Esophagus squamous epithelium (tissue), 5 donors: ENCODE measurements at regions of chr4 and their contacts with region 1.

Region 1: GRCh38 chr4:153750197-153750817 is 9.5 kb downstream of the RNF175 start:
- DNase-seq: no peak
- H3K4me3 ChIP-seq: no peak overlapping the region
- H3K27ac ChIP-seq: no peak overlapping the region
- H3K4me1 ChIP-seq: peaks cover 7 to 25% (median 16%) of the 10 kb centered on the region in 3 donors
- H3K27me3 ChIP-seq: no peaks in the 10 kb centered on the region
- CTCF ChIP-seq: peak; percentile 34 to 72 (median 59)
- POLR2A ChIP-seq: no peak

Region 2: DNA sequence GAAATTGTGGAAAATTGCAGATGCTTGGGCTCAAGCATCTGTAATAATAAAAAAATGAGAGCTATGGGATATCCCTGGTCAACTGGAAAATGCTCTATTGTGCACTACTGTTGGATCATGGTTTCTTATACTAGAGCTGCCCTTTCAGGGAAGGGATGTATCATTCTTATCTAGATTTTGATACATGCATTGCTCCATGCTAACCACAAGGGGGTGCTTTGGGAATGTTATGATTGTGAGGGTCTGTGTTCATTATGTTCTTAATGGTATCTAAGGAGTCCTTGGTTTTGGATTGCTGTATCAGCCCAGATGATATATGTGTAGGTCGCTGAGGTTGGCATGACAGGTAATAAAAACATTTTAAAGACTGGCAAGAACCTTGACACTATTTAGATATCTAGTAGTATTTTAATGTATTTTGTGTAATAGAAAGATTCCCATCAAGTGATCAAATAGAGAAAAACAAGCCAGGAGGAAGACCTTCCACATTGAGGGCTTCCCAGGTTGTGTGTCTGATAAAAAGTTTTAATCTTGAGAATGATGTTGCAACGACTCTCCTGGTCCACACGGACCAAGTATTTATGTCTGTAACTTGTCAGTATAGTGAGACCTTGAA is 115.5 kb before region 1 on chr4:
- intact Hi-C with region 1: loop called (anchors 10 kb)
- DNase-seq: no peak
- H3K4me3 ChIP-seq: no peak overlapping the region
- H3K27ac ChIP-seq: no peak overlapping the region
- H3K4me1 ChIP-seq: no peaks in the 10 kb centered on the region
- H3K27me3 ChIP-seq: no peaks in the 10 kb centered on the region
- CTCF ChIP-seq: peak; percentile 28 to 71 (median 58)
- POLR2A ChIP-seq: no peak

Region 3: DNA sequence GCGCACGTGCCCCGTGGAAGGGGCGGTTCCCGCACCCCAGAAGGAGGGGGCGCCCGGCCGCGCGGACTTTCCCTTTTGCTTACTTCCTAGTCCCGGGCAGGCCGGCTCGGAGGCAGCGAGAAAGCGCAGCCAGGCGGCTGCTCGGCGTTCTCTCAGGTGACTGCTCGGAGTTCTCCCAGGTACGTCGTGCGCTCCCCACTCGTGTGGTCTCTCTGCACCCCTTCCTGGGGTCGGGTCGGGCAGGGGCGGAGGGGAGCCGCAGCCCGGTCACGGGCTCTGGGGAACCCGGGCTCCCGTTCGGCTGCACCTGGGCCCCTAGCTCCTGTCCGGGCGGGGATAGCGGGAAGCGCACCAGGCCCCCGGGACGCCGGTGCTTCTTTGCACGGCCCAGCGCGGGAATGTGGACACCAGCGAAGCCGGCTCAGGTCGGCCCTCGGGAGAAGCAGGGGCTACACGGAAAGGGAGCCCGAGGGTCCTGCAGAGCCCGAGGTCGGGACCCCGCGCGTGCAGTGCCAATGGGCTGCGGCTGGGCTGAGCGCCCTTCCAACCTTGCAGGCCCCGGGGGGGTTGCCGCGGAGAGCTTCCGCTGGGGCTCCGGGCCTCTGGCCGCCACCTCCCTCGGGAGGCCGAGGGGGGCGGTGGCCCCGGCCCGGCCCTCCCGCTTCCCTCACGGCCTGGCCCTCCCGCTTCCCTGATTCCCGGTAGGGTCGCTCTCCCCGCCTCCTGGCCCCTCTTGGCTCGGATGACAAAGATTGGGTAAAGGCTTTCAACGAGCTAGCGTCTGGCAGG is 65.9 kb before region 1 on chr4 and contains the start of gene TLR2:
- intact Hi-C with region 1: no loop called
- DNase-seq: peak; percentile 9
- H3K4me3 ChIP-seq: peak within 1 kb of the TSS; percentile 49 to 83 (median 66)
- H3K27ac ChIP-seq: peak within 1 kb of the TSS; percentile 42 to 67 (median 66)
- H3K4me1 ChIP-seq: peaks cover 7 to 21% (median 9%) of the 10 kb centered on the region in 3 donors
- H3K27me3 ChIP-seq: peaks cover 0 to 18% (median 0%) of the 10 kb centered on the region in 4 donors
- CTCF ChIP-seq: peak in 1 of 6 experiments; percentile 26
- POLR2A ChIP-seq: peak in 1 of 4 donors; percentile 60
- total RNA-seq, gene TLR2: 5.3 to 26.9 (median 17.3) TPM

Region 4: DNA sequence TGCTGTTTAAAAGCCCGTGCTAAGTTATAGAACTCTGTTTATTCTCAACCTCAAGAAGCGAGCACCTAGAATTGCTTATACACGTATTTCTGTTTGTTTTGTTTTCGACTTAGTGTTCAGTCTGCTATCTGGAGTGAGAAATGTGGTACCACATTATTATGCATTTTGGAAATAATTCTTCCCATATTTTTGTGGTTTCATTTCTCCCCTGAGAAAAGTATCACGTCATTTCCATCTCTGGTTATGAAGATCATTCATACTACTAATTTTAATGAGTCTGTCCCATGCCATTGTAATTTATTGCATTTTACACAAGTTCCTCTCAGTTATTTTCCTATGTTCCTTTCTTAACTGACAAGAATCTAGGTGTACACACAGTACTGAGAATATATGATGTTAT is 555.3 kb after region 1 on chr4:
- intact Hi-C with region 1: no loop called
- DNase-seq: no peak
- H3K4me3 ChIP-seq: no peak overlapping the region
- H3K27ac ChIP-seq: no peak overlapping the region
- H3K4me1 ChIP-seq: no peaks in the 10 kb centered on the region
- H3K27me3 ChIP-seq: no peaks in the 10 kb centered on the region
- CTCF ChIP-seq: no peak
- POLR2A ChIP-seq: no peak